Cardiac septum (tissue), 1 donor: ENCODE measurements at regions of chr2 and their contacts with region 1.

Region 1: GRCh38 chr2:12797815-12798214 is 81.1 kb downstream of the TRIB2 start:
- DNase-seq: no peak

Region 2: GRCh38 chr2:11829947-11830707 is 967.7 kb before region 1 on chr2:
- intact Hi-C with region 1: loop called (anchors 10 kb)
- DNase-seq: no peak

Region 3: GRCh38 chr2:12764075-12764730 is 33.6 kb before region 1 on chr2:
- intact Hi-C with region 1: loop called (anchors 5 kb)
- DNase-seq: no peak